ENCODE measurements at regions of chrX and their contacts with region 1.

Region 1: DNA sequence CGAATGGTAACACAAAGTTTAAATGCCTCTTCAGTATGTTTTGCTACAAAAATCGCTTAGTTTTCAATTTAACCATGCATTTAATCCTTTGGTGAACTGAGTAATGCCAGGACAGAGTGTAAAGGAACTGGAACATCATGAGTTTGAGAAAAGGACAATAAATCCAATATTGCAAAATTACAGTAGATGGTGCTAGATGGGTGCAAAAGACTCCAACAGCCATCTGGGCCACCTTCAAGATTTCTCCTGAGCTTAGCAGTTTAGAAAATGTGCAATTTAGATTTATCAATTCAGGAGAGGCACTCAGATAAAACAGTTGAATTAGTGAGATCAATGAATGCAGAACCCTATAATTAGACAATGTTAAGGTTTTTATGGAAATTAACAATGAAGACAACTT is 33.2 kb upstream of the MID1IP1 start:
- DNase-seq: no peak
- ATAC-seq: 0 out of 2 replicates have a peak, but pooled peaks have one; percentile 53
- H3K4me3 ChIP-seq: no peak overlapping the region
- H3K27ac ChIP-seq: no peak overlapping the region
- H3K4me1 ChIP-seq: no peaks in the 10 kb centered on the region
- H3K27me3 ChIP-seq: no peaks in the 10 kb centered on the region
- CTCF ChIP-seq: peak in 2 of 3 experiments; percentile 31 to 36; a peak in 3 of 6 replicates
- POLR2A ChIP-seq: no peak
- RAD21 ChIP-seq: peak; percentile 65

Region 2: DNA sequence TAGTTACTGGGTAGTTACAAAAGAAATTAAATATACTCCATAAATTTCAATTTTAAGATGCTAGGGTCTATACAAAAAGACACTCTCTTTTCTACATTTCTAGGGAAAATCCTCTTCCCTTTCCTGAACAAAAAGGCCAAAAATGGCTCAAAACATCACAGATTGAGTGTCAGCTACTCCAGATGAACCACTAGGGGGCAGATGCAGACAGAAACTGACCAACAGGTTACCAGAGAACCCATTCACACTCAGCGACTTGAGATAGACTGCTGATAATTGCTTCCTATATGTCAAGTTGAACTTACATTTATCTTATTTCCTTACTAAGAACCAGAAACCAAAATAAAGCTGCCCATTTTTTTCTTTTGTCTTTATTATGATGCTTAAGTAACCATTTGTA is 50.2 kb before region 1 on chrX:
- CTCF ChIA-PET with region 1: no interaction called
- POLR2A ChIA-PET with region 1: no interaction called
- RAD21 ChIA-PET with region 1: no interaction called
- intact Hi-C with region 1: no loop called
- DNase-seq: peak; percentile 16
- ATAC-seq: peak; percentile 60; the same call in 1 of the 2 replicates
- H3K4me3 ChIP-seq: no peak overlapping the region
- H3K27ac ChIP-seq: no peak overlapping the region
- H3K4me1 ChIP-seq: no peaks in the 10 kb centered on the region
- H3K27me3 ChIP-seq: no peaks in the 10 kb centered on the region
- CTCF ChIP-seq: peak; percentile 4 to 63 (median 55); a peak in 3 of 6 replicates
- POLR2A ChIP-seq: no peak
- RAD21 ChIP-seq: peak; percentile 40

Region 3: GRCh38 chrX:38985375-38985774 is 217.3 kb after region 1 on chrX:
- CTCF ChIA-PET with region 1: interaction called, 4 read pairs
- POLR2A ChIA-PET with region 1: no interaction called
- RAD21 ChIA-PET with region 1: no interaction called
- intact Hi-C with region 1: loop called (anchors 5 kb)
- DNase-seq: no peak
- ATAC-seq: peak; percentile 71
- H3K4me3 ChIP-seq: no peak overlapping the region
- H3K27ac ChIP-seq: no peak overlapping the region
- H3K4me1 ChIP-seq: no peaks in the 10 kb centered on the region
- H3K27me3 ChIP-seq: no peaks in the 10 kb centered on the region
- CTCF ChIP-seq: peak in 2 of 3 experiments; percentile 26 to 49; a peak in 4 of 6 replicates
- POLR2A ChIP-seq: no peak
- RAD21 ChIP-seq: peak; percentile 51

Region 4: GRCh38 chrX:39149761-39150160 is 381.7 kb after region 1 on chrX:
- CTCF ChIA-PET with region 1: interaction called, 14 read pairs
- POLR2A ChIA-PET with region 1: no interaction called
- RAD21 ChIA-PET with region 1: interaction called in 1 of 2 experiments, 3 read pairs
- intact Hi-C with region 1: loop called (anchors 5 kb)
- DNase-seq: no peak
- ATAC-seq: peak; percentile 57; the same call in 1 of the 2 replicates
- H3K4me3 ChIP-seq: no peak overlapping the region
- H3K27ac ChIP-seq: no peak overlapping the region
- H3K4me1 ChIP-seq: no peaks in the 10 kb centered on the region
- H3K27me3 ChIP-seq: no peaks in the 10 kb centered on the region
- CTCF ChIP-seq: peak; percentile 26 to 71 (median 67); a peak in 5 of 6 replicates
- POLR2A ChIP-seq: no peak
- RAD21 ChIP-seq: peak; percentile 54

Measured in HCT116 (cell line).